ENCODE measurements at regions of chr1 and their contacts with region 1.

Region 1: DNA sequence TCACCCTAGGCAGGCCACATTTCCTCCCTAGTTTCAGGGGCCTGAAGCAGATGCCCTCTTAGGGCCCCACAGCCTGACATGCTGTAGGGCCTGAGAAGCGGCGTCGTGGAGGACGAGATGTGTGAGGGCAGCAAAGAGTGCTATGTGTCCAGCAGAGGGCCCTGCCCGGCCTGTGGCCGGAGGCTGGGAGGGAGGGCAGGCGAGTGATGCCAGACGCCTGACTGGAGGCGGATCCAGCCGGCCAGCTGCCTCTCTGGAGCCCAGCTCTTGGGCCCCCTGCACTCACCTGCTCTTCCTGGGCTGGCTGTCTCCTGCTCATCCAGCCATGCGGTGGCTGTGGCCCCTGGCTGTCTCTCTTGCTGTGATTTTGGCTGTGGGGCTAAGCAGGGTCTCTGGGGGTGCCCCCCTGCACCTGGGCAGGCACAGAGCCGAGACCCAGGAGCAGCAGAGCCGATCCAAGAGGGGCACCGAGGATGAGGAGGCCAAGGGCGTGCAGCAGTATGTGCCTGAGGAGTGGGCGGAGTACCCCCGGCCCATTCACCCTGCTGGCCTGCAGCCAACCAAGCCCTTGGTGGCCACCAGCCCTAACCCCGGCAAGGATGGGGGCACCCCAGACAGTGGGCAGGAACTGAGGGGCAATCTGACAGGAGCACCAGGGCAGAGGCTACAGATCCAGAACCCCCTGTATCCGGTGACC is at the start of gene GPR37L1:
- DNase-seq: no peak
- ATAC-seq: no peak
- H3K4me3 ChIP-seq: no peak within 1 kb of the TSS
- H3K4me1 ChIP-seq: peaks cover 10% of the 10 kb centered on the region
- CTCF ChIP-seq: no peak
- total RNA-seq, gene GPR37L1: 2.4 to 3.5 (median 2.9) TPM

Region 2: DNA sequence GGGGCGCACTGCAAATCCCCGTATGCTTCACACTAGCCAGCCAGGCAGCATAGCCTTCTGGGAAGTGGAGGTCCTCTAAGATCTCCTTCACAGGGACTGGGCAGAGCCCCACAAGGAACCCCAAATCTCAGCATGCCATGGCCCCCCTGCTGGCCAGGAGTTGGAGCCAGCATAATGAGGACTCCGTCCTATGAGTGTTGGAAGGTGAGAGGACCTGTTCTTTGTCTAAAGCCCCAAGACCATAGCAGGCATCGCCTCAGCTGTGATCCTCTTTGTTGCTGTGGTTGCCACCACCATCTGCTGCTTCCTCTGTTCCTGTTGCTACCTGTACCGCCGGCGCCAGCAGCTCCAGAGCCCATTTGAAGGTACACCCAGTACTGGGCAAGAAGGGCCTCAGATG is 232.6 kb before region 1 on chr1:
- intact Hi-C with region 1: loop called in 1 of 2 experiments (anchors 5 kb)
- DNase-seq: peak in 1 of 3 donors; percentile 10
- ATAC-seq: no peak
- H3K4me3 ChIP-seq: no peak overlapping the region
- H3K4me1 ChIP-seq: peaks cover 9% of the 10 kb centered on the region
- CTCF ChIP-seq: no peak

Region 3: GRCh38 chr1:202009326-202010179 is 113.2 kb before region 1 on chr1:
- intact Hi-C with region 1: loop called (anchors 5 to 10 kb)
- DNase-seq: peak; percentile 64 to 97 (median 77)
- ATAC-seq: peak; percentile 58
- H3K4me3 ChIP-seq: peak overlapping the region; percentile 9
- H3K4me1 ChIP-seq: no peaks in the 10 kb centered on the region
- CTCF ChIP-seq: peak; percentile 65

Measured in mucosa of descending colon (tissue), 3 donors.